Left cardiac atrium (tissue), 4 donors: ENCODE measurements at regions of chr3 and their contacts with region 1.

Region 1: GRCh38 chr3:61912158-61912557 is 350.8 kb downstream of the PTPRG start:
- DNase-seq: no peak
- ATAC-seq: no peak

Region 2: GRCh38 chr3:61864886-61865285 is 47.3 kb before region 1 on chr3:
- intact Hi-C with region 1: loop called in 1 of 2 experiments (anchors 5 kb)
- DNase-seq: no peak
- ATAC-seq: no peak

Region 3: DNA sequence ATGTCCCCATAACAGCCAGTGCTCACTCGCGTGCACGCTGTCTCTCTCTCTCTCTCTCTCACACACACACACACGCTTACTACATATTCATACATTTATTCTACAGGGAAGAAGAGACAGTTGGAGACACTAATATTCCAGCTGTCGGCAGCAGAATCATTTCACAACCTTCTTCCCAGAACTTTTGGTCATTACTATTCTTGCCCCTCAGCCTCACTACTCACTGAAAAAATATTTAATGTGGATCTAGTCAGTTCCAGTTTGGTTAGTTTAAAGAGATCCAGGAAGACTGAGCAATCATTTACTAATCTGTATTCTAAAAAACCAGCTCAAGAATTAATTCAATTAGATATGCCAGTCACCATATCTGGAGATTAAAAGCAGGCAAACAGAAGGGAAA is 44.1 kb after region 1 on chr3:
- intact Hi-C with region 1: no loop called
- DNase-seq: no peak
- ATAC-seq: peak; percentile 38 to 66